Activated B cell treated with CpG ODN at 0.5 μM for 24 hours (primary cell): ENCODE measurements at regions of chr3 and their contacts with region 1.

Region 1: DNA sequence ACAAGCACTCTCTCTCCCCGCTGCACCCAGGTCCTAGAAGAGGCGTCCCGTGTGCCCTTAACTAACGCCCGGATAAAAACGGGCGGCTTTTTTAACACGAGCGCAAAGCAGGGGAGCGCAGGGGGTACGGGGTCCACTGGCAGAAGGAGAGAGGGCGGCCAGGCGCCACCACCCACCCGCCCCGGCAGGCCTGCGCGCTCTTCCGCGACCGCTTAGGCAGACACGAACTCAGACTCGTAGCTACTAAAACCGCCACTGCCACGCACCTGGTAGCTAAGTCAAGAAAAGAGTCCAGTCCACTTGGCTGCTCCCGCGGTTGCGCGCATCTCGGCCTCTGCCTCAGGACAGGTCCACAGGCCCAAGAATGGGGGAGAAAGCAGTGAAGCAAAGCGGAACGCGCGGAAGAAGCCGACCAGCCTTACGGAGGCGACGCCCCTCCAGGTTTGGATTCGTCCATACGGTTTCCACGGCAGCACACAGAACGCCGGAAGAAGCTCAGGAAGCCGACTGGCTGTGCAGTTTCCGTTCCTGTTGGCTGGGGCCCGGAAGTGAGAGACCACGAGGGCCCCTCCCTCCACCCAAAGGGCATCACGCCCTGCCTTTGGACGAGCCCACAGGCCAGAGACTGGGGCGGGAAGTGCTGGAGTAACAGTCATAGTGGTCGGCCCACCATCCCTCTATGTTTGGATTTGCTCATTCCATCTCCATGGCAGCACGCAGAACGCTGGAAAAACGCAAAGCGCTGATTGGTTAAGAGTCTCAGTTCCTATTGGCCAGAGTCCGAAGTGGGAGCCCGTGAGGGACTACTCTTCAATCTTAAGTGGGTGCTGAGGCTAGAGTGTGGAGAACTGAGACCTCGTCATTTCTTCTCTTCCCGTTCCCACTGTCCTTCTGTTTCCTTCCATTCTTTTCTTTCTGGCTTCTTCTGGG is at the start of gene ULK4:
- DNase-seq: peak; percentile 91
- ATAC-seq: peak; percentile 88
- H3K4me3 Mint-ChIP-seq: peak within 1 kb of the TSS; percentile 97
- H3K27ac Mint-ChIP-seq: peak within 1 kb of the TSS; percentile 96
- H3K4me1 Mint-ChIP-seq: peaks cover 14% of the 10 kb centered on the region
- H3K27me3 Mint-ChIP-seq: no peaks in the 10 kb centered on the region
- CTCF ChIP-seq: no peak
- total RNA-seq, gene ULK4: 16.8 and 18.6 TPM in 2 replicates

Region 2: DNA sequence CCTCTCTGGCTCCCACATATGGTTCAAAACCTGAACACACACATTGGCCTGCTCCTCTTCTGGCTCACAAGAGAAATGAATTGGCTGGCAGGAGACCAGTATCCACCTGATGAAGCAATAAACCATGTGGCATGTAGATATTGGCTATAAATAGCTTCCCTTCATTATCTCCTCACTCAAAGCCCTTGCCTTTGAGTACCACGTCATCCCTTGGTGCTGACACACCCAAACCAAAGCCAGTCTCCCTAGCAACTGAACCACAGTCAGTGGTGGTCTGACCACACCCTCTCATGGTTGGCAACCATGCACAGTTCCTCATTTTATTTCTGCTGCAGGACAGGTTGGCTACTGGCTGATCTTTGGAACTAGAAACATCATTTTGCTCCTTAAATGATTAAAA is 1338.4 kb before region 1 on chr3:
- CTCF ChIA-PET with region 1: no interaction called
- POLR2A ChIA-PET with region 1: no interaction called
- intact Hi-C with region 1: loop called (anchors 1 kb)
- DNase-seq: peak; percentile 65
- ATAC-seq: peak; percentile 92
- H3K4me3 Mint-ChIP-seq: no peak overlapping the region
- H3K27ac Mint-ChIP-seq: no peak overlapping the region
- H3K4me1 Mint-ChIP-seq: peaks cover 13% of the 10 kb centered on the region
- H3K27me3 Mint-ChIP-seq: no peaks in the 10 kb centered on the region
- CTCF ChIP-seq: no peak

Region 3: DNA sequence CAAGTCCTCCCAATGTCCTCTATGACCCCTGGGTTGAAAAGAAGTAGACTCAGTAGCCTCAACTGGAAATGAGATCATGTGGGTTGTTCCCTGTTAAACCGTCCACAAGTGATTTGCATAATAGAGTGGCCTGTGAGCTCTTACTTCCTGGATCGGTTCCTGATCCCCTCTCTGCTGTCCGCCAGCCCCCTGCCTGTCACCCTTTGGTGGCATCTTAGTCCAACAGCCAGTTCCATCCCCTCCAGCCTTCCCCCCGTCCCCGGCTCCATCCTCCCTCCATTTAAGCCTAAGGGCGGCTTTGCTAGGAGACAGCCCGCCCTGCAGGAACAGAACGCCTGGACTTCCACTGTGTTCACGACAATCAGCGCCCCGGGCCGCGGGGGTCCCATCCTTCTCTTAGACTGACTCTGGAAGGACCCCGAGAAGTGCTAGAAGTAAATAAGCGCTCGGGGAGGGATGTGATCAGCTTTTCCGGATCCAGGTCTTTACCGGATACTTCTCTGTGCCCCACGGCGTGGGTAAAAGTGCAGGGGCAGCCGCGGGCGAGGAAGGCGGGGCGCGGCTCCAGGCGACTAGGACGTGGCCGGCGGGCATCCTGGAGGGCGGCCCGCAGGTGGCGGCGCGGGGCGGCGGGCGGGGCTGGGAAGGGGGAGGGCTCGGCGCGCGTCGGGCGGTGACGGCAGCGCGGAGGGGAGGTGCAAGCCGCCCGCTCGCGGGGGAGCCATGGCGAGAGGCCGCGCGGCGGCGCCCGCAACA is 51.1 kb after region 1 on chr3:
- CTCF ChIA-PET with region 1: interaction called, 5 read pairs
- POLR2A ChIA-PET with region 1: interaction called, 32 read pairs
- intact Hi-C with region 1: loop called (anchors 1 kb)
- DNase-seq: peak; percentile 73
- ATAC-seq: peak; percentile 68
- H3K4me3 Mint-ChIP-seq: peak overlapping the region; percentile 97
- H3K27ac Mint-ChIP-seq: peak overlapping the region; percentile 99
- H3K4me1 Mint-ChIP-seq: peaks cover 59% of the 10 kb centered on the region
- H3K27me3 Mint-ChIP-seq: no peaks in the 10 kb centered on the region
- CTCF ChIP-seq: no peak

Region 4: DNA sequence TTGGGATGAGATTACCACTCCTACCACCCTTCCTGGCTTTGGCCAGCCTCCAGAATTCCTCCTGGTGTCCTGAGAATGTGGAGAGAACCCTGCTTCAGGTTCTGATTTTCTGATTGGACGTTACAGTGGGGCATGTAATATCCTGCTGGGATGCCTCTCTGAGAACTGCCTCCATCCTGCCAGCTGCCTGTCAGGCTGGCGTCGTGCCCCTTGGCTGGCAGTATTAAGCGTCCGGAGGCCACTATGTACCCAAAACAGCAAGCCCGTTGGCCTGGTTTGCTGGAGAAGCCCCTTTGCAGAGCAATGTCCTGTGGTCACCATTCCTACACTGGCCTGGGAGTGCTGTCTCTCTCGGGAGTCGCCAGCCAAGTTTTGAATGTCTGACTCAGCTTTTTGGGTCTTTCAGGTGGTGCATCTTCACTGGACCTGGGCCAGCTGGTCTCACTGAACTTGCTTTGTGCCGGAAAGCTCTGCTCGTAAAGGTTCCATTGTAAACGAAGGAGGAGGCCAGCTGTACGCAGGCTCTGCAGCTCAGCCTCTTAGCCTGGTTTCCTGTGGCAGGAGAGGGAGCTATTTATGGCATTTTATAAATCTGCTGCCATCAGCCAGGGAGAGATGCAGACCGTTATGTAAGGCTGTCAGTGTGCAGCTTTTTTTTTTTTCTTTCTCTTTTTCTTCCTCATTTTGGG is 110.0 kb after region 1 on chr3:
- CTCF ChIA-PET with region 1: no interaction called
- POLR2A ChIA-PET with region 1: interaction called, 25 read pairs
- intact Hi-C with region 1: loop called (anchors 1 kb)
- DNase-seq: no peak
- ATAC-seq: no peak
- H3K4me3 Mint-ChIP-seq: peak overlapping the region; percentile 44
- H3K27ac Mint-ChIP-seq: peak overlapping the region; percentile 80
- H3K4me1 Mint-ChIP-seq: peaks cover 86% of the 10 kb centered on the region
- H3K27me3 Mint-ChIP-seq: no peaks in the 10 kb centered on the region
- CTCF ChIP-seq: no peak

Region 5: GRCh38 chr3:42101048-42101447 is 139.0 kb after region 1 on chr3:
- CTCF ChIA-PET with region 1: interaction called, 11 read pairs
- POLR2A ChIA-PET with region 1: interaction called, 14 read pairs
- intact Hi-C with region 1: loop called (anchors 1 kb)
- DNase-seq: no peak
- ATAC-seq: no peak
- H3K4me3 Mint-ChIP-seq: no peak overlapping the region
- H3K27ac Mint-ChIP-seq: peak overlapping the region; percentile 24
- H3K4me1 Mint-ChIP-seq: peaks cover 37% of the 10 kb centered on the region
- H3K27me3 Mint-ChIP-seq: no peaks in the 10 kb centered on the region
- CTCF ChIP-seq: no peak

Region 6: GRCh38 chr3:42772670-42773408 is 810.8 kb after region 1 on chr3 and contains the start of gene CCDC13:
- CTCF ChIA-PET with region 1: no interaction called
- POLR2A ChIA-PET with region 1: no interaction called
- intact Hi-C with region 1: loop called (anchors 2 kb)
- DNase-seq: peak; percentile 97
- ATAC-seq: peak; percentile 90
- H3K4me3 Mint-ChIP-seq: peak within 1 kb of the TSS; percentile 90
- H3K27ac Mint-ChIP-seq: peak within 1 kb of the TSS; percentile 89
- H3K4me1 Mint-ChIP-seq: peaks cover 13% of the 10 kb centered on the region
- H3K27me3 Mint-ChIP-seq: no peaks in the 10 kb centered on the region
- CTCF ChIP-seq: no peak
- total RNA-seq, gene CCDC13: 1.7 and 1.9 TPM in 2 replicates